BJ (cell line): ENCODE measurements at regions of chr11 and their contacts with region 1.

Region 1: DNA sequence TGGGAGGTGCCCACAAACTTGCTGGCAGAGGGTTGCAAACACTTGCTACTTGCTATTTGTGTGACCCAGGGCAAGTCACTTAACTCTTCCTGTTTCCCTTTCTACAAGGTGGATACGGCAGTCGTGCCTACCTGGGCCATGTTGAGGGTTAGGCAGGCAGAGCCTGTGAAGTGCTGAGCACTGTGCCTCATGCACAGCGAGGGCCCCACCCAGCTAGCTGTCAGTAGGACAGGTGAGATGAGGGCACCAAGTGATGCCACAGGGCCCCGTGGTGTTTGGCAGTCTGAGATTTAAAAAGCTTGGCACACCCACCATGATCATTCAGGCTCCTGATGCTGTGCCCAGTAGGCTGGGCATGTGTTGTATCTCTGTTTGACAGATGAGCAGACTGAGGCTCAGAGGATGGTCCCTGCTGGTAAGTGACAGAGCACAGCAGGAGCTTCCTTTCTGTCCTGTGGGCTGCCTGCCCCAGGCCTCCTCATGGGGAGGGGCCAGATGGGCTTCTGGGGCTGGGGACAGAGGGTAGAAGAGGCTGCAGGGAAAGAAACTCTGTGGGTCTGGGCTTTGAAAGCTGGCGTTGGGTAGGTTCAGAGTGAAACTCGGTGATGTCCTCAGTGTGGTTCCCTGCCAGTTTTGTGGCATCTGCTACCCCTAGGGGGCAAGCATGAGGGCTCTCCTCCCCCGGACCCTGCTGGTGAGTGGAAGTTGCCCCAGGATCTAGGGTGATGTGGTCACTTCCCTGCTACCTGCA is 59.3 kb downstream of the TSPAN18 start:
- DNase-seq: no peak
- H3K4me3 ChIP-seq: no peak overlapping the region
- H3K27me3 ChIP-seq: peaks cover 19% of the 10 kb centered on the region
- CTCF ChIP-seq: 0 out of 2 replicates have a peak, but pooled peaks have one; percentile 8

Region 2: GRCh38 chr11:44775366-44775984 is 10.6 kb before region 1 on chr11:
- CTCF ChIA-PET with region 1: interaction called, 14 read pairs
- POLR2A ChIA-PET with region 1: no interaction called
- DNase-seq: no peak
- H3K4me3 ChIP-seq: no peak overlapping the region
- H3K27me3 ChIP-seq: peaks cover 3% of the 10 kb centered on the region; the same call in 1 of the 2 replicates
- CTCF ChIP-seq: peak; percentile 81